ENCODE measurements at regions of chr10 and their contacts with region 1.

Region 1: GRCh38 chr10:43292755-43293676 is 26.2 kb upstream of the RASGEF1A start:
- DNase-seq: peak; percentile 69
- ATAC-seq: peak; percentile 77
- H3K4me3 Mint-ChIP-seq: no peak overlapping the region
- H3K27ac Mint-ChIP-seq: peak overlapping the region; percentile 85
- H3K4me1 Mint-ChIP-seq: peaks cover 82% of the 10 kb centered on the region
- H3K27me3 Mint-ChIP-seq: peaks cover 11% of the 10 kb centered on the region

Region 2: GRCh38 chr10:43237631-43238446 is 55.2 kb before region 1 on chr10:
- CTCF ChIA-PET with region 1: no interaction called
- POLR2A ChIA-PET with region 1: no interaction called
- DNase-seq: no peak
- ATAC-seq: no peak
- H3K4me3 Mint-ChIP-seq: no peak overlapping the region
- H3K27ac Mint-ChIP-seq: no peak overlapping the region
- H3K4me1 Mint-ChIP-seq: peaks cover 3% of the 10 kb centered on the region
- H3K27me3 Mint-ChIP-seq: peaks cover 24% of the 10 kb centered on the region

Region 3: GRCh38 chr10:43265799-43266721 is 27.0 kb before region 1 on chr10:
- CTCF ChIA-PET with region 1: interaction called, 23 read pairs
- POLR2A ChIA-PET with region 1: no interaction called
- DNase-seq: peak; percentile 66
- ATAC-seq: peak; percentile 78
- H3K4me3 Mint-ChIP-seq: peak overlapping the region; percentile 71
- H3K27ac Mint-ChIP-seq: peak overlapping the region; percentile 20
- H3K4me1 Mint-ChIP-seq: peaks cover 5% of the 10 kb centered on the region
- H3K27me3 Mint-ChIP-seq: peaks cover 52% of the 10 kb centered on the region

Region 4: DNA sequence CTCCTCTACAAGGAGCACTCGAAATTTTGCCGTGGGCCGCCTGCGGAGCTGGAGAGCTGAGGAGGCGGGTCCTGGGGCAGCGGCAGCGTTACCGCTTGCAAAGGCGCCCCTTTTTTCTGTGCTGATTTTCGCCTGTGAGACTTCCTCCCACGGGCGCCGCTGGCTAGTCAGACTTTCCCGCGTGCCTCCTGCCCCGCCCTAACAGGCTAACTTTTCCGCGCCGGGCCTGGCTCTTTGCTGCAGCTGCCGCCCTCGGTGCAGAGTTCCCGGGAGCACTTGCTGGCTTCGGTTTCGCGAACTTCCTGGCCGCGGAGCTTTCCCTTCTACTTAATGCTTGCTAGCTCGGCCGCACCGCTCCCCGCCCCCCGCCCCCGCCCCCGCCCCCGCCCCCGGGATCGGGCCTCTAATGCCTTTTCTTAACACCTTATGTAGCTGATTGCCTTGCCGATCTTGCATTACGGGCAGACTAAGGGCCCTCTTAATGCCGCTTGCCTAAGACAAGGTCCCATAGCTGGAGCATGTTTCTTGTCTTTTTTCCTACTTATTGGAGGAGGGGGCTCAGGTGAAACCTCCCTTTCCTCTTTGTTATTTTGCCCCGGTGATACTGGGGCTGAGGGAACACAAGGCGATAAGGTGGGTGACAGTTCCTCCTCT is 11.8 kb after region 1 on chr10:
- CTCF ChIA-PET with region 1: interaction called, 53 read pairs
- POLR2A ChIA-PET with region 1: no interaction called
- DNase-seq: peak; percentile 69
- ATAC-seq: peak; percentile 77
- H3K4me3 Mint-ChIP-seq: peak overlapping the region; percentile 28
- H3K27ac Mint-ChIP-seq: peak overlapping the region; percentile 76
- H3K4me1 Mint-ChIP-seq: peaks cover 60% of the 10 kb centered on the region
- H3K27me3 Mint-ChIP-seq: peaks cover 17% of the 10 kb centered on the region

Region 5: DNA sequence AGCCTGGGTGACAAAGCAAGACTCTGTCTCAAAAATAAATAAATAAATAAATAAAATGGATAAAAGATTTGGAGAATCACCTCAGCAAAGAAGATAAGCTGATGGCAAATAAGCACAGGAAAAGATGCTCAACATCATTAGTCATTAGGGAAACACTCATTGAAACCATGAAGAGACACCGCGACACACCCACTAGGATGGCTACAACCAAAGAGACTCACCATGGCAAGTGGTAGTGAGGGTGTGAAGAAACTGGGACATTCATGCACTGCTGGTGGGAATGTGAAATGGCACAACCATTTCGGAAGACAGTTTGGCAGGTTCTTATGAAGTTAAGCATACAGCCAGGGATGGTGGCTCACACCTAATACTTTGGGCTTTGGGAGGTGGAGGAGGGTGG is 40.6 kb after region 1 on chr10:
- CTCF ChIA-PET with region 1: interaction called, 18 read pairs
- POLR2A ChIA-PET with region 1: interaction called, 3 read pairs
- DNase-seq: no peak
- ATAC-seq: no peak
- H3K4me3 Mint-ChIP-seq: no peak overlapping the region
- H3K27ac Mint-ChIP-seq: peak overlapping the region; percentile 6
- H3K4me1 Mint-ChIP-seq: peaks cover 33% of the 10 kb centered on the region
- H3K27me3 Mint-ChIP-seq: peaks cover 3% of the 10 kb centered on the region

Region 6: DNA sequence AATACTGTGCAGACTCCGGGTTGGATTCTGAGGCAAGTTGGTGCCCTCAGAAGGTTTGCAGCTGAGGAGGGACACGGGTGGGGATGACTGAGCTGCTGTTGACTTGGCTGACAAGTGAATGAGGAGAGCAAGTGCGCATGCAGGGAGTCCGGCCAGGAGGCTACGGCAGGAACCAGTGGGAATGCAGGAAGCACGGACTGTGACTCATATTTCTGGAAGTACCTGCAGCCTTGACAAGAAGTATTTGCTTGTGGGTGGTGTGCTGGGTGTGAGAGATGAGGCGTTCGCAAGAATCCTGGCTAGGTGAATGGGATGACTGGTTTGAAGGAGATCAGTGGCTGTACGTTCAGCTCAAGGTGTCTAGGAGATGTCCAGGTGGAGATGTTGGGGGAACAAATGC is 47.6 kb after region 1 on chr10:
- CTCF ChIA-PET with region 1: interaction called, 22 read pairs
- POLR2A ChIA-PET with region 1: interaction called, 3 read pairs
- DNase-seq: no peak
- ATAC-seq: no peak
- H3K4me3 Mint-ChIP-seq: no peak overlapping the region
- H3K27ac Mint-ChIP-seq: no peak overlapping the region
- H3K4me1 Mint-ChIP-seq: peaks cover 32% of the 10 kb centered on the region
- H3K27me3 Mint-ChIP-seq: peaks cover 20% of the 10 kb centered on the region

Region 7: GRCh38 chr10:43348511-43349312 is 55.7 kb after region 1 on chr10:
- CTCF ChIA-PET with region 1: interaction called, 97 read pairs
- POLR2A ChIA-PET with region 1: interaction called, 3 read pairs
- DNase-seq: peak; percentile 94
- ATAC-seq: peak; percentile 100
- H3K4me3 Mint-ChIP-seq: no peak overlapping the region
- H3K27ac Mint-ChIP-seq: peak overlapping the region; percentile 70
- H3K4me1 Mint-ChIP-seq: peaks cover 38% of the 10 kb centered on the region
- H3K27me3 Mint-ChIP-seq: peaks cover 16% of the 10 kb centered on the region

Region 8: DNA sequence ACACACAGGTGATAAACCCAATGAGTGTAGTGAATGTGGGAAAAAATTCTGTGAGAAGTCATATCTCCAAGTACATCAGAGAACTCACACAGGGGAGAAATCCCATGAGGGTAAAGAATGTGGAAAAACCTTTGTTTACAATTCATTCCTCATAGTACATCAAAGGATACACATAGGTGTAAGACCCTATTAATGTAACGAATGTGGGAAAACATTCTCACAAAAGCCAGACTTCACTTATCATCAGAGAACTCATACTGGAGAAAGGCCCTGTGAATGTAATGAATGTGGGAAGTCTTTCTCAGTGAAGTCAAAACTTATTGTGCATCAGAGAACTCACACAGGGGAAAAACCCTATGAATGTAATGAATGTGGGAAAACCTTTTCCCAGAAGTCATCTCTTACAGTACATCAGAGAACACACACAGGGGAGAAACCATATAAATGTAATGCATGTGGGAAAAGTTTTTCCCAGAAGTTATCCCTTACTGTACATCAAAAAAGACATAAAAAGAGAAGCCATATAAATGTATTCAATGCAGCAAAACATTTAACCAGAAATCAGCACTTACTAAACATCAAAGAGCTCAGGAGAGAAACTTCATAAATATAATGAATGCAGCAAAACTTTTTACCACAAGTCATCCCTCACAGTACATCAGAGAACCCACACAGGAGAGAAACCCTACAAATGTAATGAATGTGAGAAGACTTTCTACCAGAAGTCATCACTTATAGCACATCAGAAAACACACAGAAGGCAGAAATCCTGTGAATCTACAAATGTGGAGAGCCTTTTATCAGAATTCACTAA is 231.6 kb after region 1 on chr10:
- CTCF ChIA-PET with region 1: no interaction called
- POLR2A ChIA-PET with region 1: no interaction called
- DNase-seq: no peak
- ATAC-seq: no peak
- H3K4me3 Mint-ChIP-seq: no peak overlapping the region
- H3K27ac Mint-ChIP-seq: no peak overlapping the region
- H3K4me1 Mint-ChIP-seq: no peaks in the 10 kb centered on the region
- H3K27me3 Mint-ChIP-seq: no peaks in the 10 kb centered on the region